WTC11 (cell line): ENCODE measurements at regions of chr3 and their contacts with region 1.

Region 1: GRCh38 chr3:13573884-13574797 is 25.2 kb downstream of the FBLN2 start:
- DNase-seq: no peak
- ATAC-seq: no peak
- H3K4me3 Mint-ChIP-seq: no peak overlapping the region
- H3K27ac Mint-ChIP-seq: no peak overlapping the region
- H3K4me1 Mint-ChIP-seq: peaks cover 20% of the 10 kb centered on the region
- H3K27me3 Mint-ChIP-seq: no peaks in the 10 kb centered on the region
- CTCF ChIP-seq: no peak

Region 2: DNA sequence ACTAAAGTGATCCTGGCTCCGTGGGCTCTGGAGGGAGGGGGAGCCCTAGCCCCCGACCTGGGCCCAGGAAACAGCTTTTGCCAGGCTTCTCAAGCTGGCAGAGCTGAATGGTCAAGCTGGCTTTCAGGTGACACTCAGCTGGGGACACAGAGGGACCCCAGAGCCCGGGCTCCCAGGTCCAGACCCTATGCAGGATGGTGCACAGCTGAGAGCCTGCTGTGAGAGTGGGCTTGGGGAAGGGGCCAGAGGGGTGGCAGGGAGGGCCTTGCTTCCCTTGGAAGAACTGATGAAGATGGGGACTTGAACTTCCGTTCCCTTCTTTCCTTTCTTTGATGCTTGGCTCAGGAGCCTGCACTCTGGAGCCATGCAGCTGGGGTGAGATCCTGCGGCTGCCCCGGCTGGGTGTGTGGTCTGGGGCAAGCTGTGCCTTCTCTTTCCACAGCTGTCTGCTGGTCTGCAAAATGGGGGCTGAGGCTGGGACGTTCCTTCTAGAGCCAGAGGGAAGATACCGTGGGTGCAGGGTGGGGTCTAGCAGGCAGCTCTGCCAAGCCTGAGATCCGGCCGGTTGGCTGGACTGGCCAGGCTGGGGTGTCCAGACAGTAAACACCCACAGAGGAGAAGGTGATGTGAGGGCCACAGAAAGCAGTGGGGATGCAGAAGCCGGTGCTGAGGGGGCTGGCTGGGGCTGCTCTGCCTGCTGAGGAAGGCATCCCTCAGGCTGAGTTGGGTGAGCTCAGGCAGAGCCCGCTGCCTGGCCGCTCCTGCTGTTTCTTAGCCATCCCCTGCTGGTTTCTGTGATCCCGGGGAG is 20.7 kb after region 1 on chr3:
- CTCF ChIA-PET with region 1: interaction called, 3 read pairs
- POLR2A ChIA-PET with region 1: interaction called, 11 read pairs
- DNase-seq: peak; percentile 9
- ATAC-seq: peak; percentile 27
- H3K4me3 Mint-ChIP-seq: no peak overlapping the region
- H3K27ac Mint-ChIP-seq: no peak overlapping the region
- H3K4me1 Mint-ChIP-seq: peaks cover 26% of the 10 kb centered on the region
- H3K27me3 Mint-ChIP-seq: 0 out of 2 replicates have a peak, but pooled peaks cover 3% of the 10 kb centered on the region
- CTCF ChIP-seq: no peak